ENCODE measurements at regions of chr9 and their contacts with region 1.

Region 1: DNA sequence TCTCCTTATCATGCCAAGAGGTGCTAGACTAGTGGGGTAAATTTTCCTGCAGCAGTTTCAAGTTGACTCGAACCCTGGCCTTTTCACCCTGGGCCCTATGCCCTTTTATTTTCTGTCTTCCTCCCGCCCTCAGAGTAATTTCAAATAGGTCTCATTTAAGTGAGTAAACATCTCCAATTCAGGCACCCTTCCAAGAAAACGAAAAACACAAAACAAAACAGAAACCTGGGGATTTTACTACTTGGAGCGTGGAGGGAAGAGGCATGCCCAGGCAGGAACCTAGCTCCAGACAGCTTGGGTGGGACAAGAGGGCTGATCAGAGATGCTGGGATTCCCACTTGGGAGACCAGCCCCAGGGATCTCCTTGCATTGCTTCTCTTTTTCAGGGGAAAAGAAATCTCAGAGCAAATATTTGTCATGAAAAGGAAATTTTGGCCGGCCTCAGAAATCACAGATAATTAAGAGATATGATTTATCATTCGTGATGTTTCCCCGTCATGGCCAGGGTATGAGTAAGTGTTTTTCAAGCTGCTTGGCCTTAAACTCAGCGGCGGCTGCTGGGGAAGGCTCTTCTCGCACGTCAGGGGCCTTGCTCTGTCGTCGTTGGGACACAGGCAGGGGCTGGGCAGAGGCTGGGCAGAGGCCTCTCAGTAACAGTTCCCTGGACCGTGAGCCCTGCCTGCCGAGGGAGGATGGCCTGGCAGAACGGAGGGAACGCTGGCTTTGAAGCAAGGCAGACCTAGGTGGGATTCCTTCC is 248.6 kb upstream of the KLF4 start:
- DNase-seq: peak; percentile 95
- H3K4me3 Mint-ChIP-seq: peak overlapping the region; percentile 38
- H3K27ac Mint-ChIP-seq: peak overlapping the region; percentile 99
- H3K4me1 Mint-ChIP-seq: peaks cover 74% of the 10 kb centered on the region
- H3K27me3 Mint-ChIP-seq: no peaks in the 10 kb centered on the region
- CTCF ChIP-seq: no peak

Region 2: DNA sequence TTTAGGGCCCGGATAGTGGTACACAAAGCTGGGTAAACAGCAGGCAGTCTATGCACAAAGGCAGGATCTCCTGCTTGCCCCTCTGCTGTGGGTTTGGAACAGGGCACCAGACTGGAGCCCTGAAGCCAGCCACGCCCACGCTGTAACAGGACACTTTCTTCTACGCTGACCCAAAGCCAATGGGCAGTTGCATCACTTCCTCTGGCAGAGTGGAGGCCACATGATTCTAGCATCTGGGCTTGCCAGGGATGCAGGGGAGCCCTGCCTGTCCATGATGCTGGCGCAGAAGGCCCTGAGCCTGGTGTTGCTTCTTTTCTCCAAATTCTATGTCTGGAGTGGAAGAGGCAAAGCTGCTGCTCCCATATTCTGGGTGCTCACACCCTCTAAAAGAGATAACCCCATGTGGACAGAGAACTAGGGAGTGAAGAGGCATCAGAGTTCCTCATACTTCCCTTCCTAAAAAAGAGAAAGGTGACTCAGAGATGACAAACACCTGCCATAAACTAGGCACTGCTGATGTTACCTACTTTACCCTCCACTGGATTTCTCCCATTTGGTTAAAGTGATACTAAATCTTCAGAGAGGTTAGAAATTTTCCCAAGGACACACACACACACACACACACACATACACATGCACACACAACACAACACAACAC is 11.8 kb after region 1 on chr9:
- CTCF ChIA-PET with region 1: interaction called, 12 read pairs
- POLR2A ChIA-PET with region 1: interaction called, 77 read pairs
- intact Hi-C with region 1: loop called (anchors 1 kb)
- DNase-seq: peak; percentile 98
- H3K4me3 Mint-ChIP-seq: no peak overlapping the region
- H3K27ac Mint-ChIP-seq: peak overlapping the region; percentile 43
- H3K4me1 Mint-ChIP-seq: peaks cover 38% of the 10 kb centered on the region
- H3K27me3 Mint-ChIP-seq: no peaks in the 10 kb centered on the region
- CTCF ChIP-seq: no peak

Region 3: DNA sequence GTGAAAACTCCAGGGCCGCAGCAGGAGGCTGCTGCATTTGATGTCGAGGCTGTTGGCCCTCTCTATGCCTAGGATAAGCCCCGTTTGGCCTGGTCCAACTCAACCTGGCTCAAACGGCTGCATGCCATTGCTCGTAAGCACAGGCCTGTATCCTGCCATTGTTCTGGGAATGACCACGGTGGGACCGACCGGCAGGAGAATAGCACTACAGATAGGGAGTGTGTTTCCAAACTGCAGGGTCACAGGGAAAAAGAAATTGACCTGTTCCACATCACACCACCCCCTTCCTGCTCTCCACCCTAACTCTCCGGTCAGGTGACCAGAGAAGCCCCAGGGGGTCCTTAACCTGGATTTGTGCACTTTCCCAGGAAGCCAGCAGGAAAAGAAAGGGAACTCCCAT is 30.1 kb after region 1 on chr9:
- CTCF ChIA-PET with region 1: no interaction called
- POLR2A ChIA-PET with region 1: no interaction called
- intact Hi-C with region 1: no loop called
- DNase-seq: no peak
- H3K4me3 Mint-ChIP-seq: no peak overlapping the region
- H3K27ac Mint-ChIP-seq: no peak overlapping the region
- H3K4me1 Mint-ChIP-seq: no peaks in the 10 kb centered on the region
- H3K27me3 Mint-ChIP-seq: no peaks in the 10 kb centered on the region
- CTCF ChIP-seq: no peak

Region 4: GRCh38 chr9:108093773-108094675 is 355.9 kb after region 1 on chr9:
- CTCF ChIA-PET with region 1: no interaction called
- POLR2A ChIA-PET with region 1: interaction called, 10 read pairs
- intact Hi-C with region 1: no loop called
- DNase-seq: peak; percentile 66
- H3K4me3 Mint-ChIP-seq: no peak overlapping the region
- H3K27ac Mint-ChIP-seq: peak overlapping the region; percentile 81
- H3K4me1 Mint-ChIP-seq: peaks cover 13% of the 10 kb centered on the region
- H3K27me3 Mint-ChIP-seq: no peaks in the 10 kb centered on the region
- CTCF ChIP-seq: no peak

Region 5: GRCh38 chr9:108478431-108478837 is 740.3 kb after region 1 on chr9:
- CTCF ChIA-PET with region 1: no interaction called
- POLR2A ChIA-PET with region 1: interaction called, 11 read pairs
- intact Hi-C with region 1: loop called (anchors 10 kb)
- DNase-seq: peak; percentile 97
- H3K4me3 Mint-ChIP-seq: peak overlapping the region; percentile 37
- H3K27ac Mint-ChIP-seq: peak overlapping the region; percentile 89
- H3K4me1 Mint-ChIP-seq: peaks cover 47% of the 10 kb centered on the region
- H3K27me3 Mint-ChIP-seq: no peaks in the 10 kb centered on the region
- CTCF ChIP-seq: no peak

Measured in MCF 10A (cell line).